ENCODE measurements at regions of chr10 and their contacts with region 1.

Region 1: GRCh38 chr10:125048101-125048864 is 106.4 kb downstream of the ZRANB1 start:
- DNase-seq: peak; percentile 52
- ATAC-seq: peak; percentile 83
- H3K4me3 Mint-ChIP-seq: no peak overlapping the region
- H3K27ac Mint-ChIP-seq: no peak overlapping the region
- H3K4me1 Mint-ChIP-seq: no peaks in the 10 kb centered on the region
- H3K27me3 Mint-ChIP-seq: peaks cover 55% of the 10 kb centered on the region
- CTCF ChIP-seq: peak; percentile 69

Region 2: GRCh38 chr10:124983255-124983705 is 65.0 kb before region 1 on chr10:
- CTCF ChIA-PET with region 1: no interaction called
- POLR2A ChIA-PET with region 1: no interaction called
- intact Hi-C with region 1: no loop called
- DNase-seq: no peak
- ATAC-seq: no peak
- H3K4me3 Mint-ChIP-seq: no peak overlapping the region
- H3K27ac Mint-ChIP-seq: no peak overlapping the region
- H3K4me1 Mint-ChIP-seq: peaks cover 1% of the 10 kb centered on the region
- H3K27me3 Mint-ChIP-seq: no peaks in the 10 kb centered on the region
- CTCF ChIP-seq: no peak

Region 3: GRCh38 chr10:125144693-125145623 is 96.7 kb after region 1 on chr10:
- CTCF ChIA-PET with region 1: no interaction called
- POLR2A ChIA-PET with region 1: no interaction called
- intact Hi-C with region 1: loop called (anchors 2 kb)
- DNase-seq: no peak
- ATAC-seq: peak; percentile 66
- H3K4me3 Mint-ChIP-seq: no peak overlapping the region
- H3K27ac Mint-ChIP-seq: no peak overlapping the region
- H3K4me1 Mint-ChIP-seq: peaks cover 31% of the 10 kb centered on the region
- H3K27me3 Mint-ChIP-seq: peaks cover 68% of the 10 kb centered on the region
- CTCF ChIP-seq: no peak

Region 4: GRCh38 chr10:125217986-125218680 is 169.8 kb after region 1 on chr10:
- CTCF ChIA-PET with region 1: interaction called, 5 read pairs
- POLR2A ChIA-PET with region 1: no interaction called
- intact Hi-C with region 1: loop called (anchors 1 kb)
- DNase-seq: no peak
- ATAC-seq: no peak
- H3K4me3 Mint-ChIP-seq: no peak overlapping the region
- H3K27ac Mint-ChIP-seq: no peak overlapping the region
- H3K4me1 Mint-ChIP-seq: no peaks in the 10 kb centered on the region
- H3K27me3 Mint-ChIP-seq: peaks cover 7% of the 10 kb centered on the region
- CTCF ChIP-seq: no peak

Region 5: GRCh38 chr10:125343118-125343925 is 295.0 kb after region 1 on chr10:
- CTCF ChIA-PET with region 1: interaction called, 10 read pairs
- POLR2A ChIA-PET with region 1: no interaction called
- intact Hi-C with region 1: no loop called
- DNase-seq: no peak
- ATAC-seq: no peak
- H3K4me3 Mint-ChIP-seq: no peak overlapping the region
- H3K27ac Mint-ChIP-seq: no peak overlapping the region
- H3K4me1 Mint-ChIP-seq: peaks cover 2% of the 10 kb centered on the region
- H3K27me3 Mint-ChIP-seq: peaks cover 4% of the 10 kb centered on the region
- CTCF ChIP-seq: no peak

Measured in activated B cell treated with CpG ODN at 0.5 μM for 24 hours (primary cell).